ENCODE measurements at regions of chr7 and their contacts with region 1.

Region 1: GRCh38 chr7:66628361-66629140 is at the start of gene KCTD7:
- DNase-seq: peak; percentile 97 to 100
- H3K4me3 ChIP-seq: peak within 1 kb of the TSS; percentile 64 to 77
- H3K27ac ChIP-seq: peak within 1 kb of the TSS; percentile 90 to 98
- H3K4me1 ChIP-seq: peaks cover 0 to 25% (median 13%) of the 10 kb centered on the region in 4 donors
- H3K27me3 ChIP-seq: no peaks in the 10 kb centered on the region
- CTCF ChIP-seq: peak in 1 of 2 experiments; percentile 5

Region 2: DNA sequence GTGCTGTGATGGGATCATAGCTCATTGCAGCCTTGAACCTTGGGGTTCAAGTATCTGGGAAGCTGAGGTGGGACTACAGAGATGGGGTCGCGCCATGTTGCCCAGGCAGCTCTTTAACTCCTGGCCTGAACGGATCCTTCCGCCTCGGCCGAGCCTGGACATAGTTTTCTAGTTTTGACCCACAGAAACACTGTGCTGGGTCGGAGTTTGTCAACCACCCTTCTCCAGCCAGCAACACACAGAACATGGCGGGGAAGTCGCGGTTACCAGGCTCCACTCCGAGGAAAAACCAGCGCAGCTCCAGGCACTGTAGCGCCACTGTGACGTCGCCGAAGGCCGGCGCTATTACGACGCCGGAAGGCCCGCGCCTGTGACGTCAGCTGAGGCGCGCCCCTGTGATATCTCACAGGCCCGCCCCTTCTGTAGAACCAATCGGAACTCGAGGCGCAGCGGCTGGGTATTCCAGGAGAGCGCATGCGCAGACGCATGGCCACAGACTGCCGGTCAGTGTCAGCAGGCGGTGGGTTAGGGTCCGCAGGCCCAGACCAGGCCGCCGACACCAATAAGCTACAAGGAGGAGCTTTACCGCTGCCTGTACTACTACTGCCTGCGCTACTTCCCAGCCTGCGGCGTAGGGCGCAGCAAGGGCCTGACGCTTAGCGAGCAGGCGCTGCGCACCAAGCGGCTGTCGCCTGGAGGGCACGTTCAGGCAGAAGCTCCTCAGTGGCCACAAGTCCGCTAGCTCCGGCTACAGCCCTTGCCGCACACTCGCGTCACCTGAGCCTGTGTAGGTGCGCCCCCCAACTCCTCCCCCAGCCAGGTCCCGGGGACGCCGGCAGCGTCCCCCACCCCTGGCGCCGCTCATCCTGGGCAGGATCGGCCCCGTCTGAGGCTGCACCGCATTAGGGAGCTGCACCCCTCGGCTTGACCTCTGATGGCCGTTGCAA is 135.0 kb before region 1 on chr7:
- intact Hi-C with region 1: loop called (anchors 10 kb)
- DNase-seq: peak; percentile 98 to 99
- H3K4me3 ChIP-seq: peak overlapping the region; percentile 79 to 92
- H3K27ac ChIP-seq: peak overlapping the region; percentile 94 to 95
- H3K4me1 ChIP-seq: peaks cover 0 to 19% (median 12%) of the 10 kb centered on the region in 4 donors
- H3K27me3 ChIP-seq: no peaks in the 10 kb centered on the region
- CTCF ChIP-seq: peak; percentile 26 to 35

Region 3: GRCh38 chr7:66591799-66592596 is 36.6 kb before region 1 on chr7:
- intact Hi-C with region 1: loop called (anchors 2 kb)
- DNase-seq: peak; percentile 92 to 96
- H3K4me3 ChIP-seq: peak overlapping the region; percentile 87 to 89
- H3K27ac ChIP-seq: peak overlapping the region; percentile 95 to 96
- H3K4me1 ChIP-seq: peaks cover 5 to 42% (median 23%) of the 10 kb centered on the region in 4 donors
- H3K27me3 ChIP-seq: no peaks in the 10 kb centered on the region
- CTCF ChIP-seq: no peak

Region 4: DNA sequence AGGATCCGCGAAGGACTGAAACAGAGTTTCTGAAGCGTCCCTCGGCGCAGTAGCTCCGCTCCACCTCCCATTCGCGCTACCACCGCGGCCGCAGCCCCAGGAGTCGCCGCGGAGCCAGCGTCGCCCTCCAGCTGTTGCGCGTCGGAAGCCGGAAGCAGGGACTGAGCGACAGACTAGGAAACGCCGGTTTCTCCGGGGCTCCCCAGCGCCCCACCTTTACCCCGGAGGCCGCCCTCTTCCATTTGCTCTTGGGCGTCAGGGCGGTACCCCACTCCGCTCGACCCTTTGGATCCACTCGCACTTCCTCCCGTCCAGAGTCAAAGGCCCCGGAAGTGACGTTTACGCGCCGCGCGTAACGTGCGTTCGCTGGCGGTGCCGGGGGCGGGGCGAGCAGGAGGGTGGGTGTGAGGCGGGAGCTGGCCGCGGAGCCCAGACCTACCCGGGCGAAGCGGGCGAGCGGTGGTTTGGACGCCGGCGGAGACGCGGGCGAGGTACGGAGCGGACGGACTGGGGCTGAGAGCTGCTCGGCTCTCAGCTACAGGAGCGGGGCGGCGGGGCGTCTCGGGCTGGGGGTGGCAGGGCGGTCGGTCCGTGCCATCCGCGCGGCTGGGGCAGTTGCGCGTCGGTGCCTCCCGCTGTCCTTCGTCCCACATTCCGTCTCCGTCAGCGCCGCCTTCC is 111.9 kb after region 1 on chr7 and contains the start of gene RABGEF1:
- intact Hi-C with region 1: loop called (anchors 2 kb)
- DNase-seq: peak; percentile 98 to 99
- H3K4me3 ChIP-seq: peak within 1 kb of the TSS; percentile 91 to 92
- H3K27ac ChIP-seq: peak within 1 kb of the TSS; percentile 94 to 98
- H3K4me1 ChIP-seq: peaks cover 0 to 44% (median 25%) of the 10 kb centered on the region in 4 donors
- H3K27me3 ChIP-seq: no peaks in the 10 kb centered on the region
- CTCF ChIP-seq: no peak

Measured in tibial artery (tissue), 4 donors.